ENCODE measurements at regions of chr6 and their contacts with region 1.

Region 1: GRCh38 chr6:40328405-40328987 is 258.7 kb downstream of the LRFN2 start:
- DNase-seq: peak; percentile 50 to 63
- H3K4me3 ChIP-seq: no peak overlapping the region
- H3K27ac ChIP-seq: no peak overlapping the region
- H3K4me1 ChIP-seq: no peaks in the 10 kb centered on the region
- H3K27me3 ChIP-seq: no peaks in the 10 kb centered on the region
- CTCF ChIP-seq: peak in 2 of 3 donors; percentile 71 to 90
- POLR2A ChIP-seq: no peak

Region 2: GRCh38 chr6:40341726-40342125 is 13.2 kb after region 1 on chr6:
- intact Hi-C with region 1: loop called (anchors 1 kb)
- DNase-seq: no peak
- H3K4me3 ChIP-seq: no peak overlapping the region
- H3K27ac ChIP-seq: no peak overlapping the region
- H3K4me1 ChIP-seq: no peaks in the 10 kb centered on the region
- H3K27me3 ChIP-seq: peaks cover 0 to 3% of the 10 kb centered on the region in 2 donors
- CTCF ChIP-seq: no peak
- POLR2A ChIP-seq: no peak

Region 3: DNA sequence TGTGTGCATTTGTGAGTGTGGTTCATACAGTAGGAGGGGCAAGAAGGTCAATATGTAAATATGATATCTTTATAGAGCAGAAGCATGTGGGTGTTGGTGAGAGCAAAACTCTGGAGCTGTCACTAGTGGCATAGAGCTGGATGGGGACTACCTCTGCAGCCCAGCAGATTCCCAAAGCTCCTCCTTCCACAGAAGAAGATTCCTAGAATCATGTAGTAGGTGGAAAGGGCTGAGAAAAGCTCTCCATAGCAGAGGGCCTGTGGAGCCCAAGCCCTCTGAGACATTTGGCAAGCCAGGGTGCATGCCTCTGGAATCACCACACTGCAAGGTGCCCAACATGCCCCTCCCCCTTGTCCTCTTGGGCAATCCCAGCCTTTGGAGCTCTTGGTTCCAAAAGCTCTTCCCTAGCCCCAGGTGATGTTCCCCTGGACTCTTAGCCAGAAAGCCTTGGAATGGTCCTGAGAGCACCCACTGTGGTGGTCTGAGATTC is 25.5 kb after region 1 on chr6:
- intact Hi-C with region 1: loop called (anchors 1 kb)
- DNase-seq: no peak
- H3K4me3 ChIP-seq: no peak overlapping the region
- H3K27ac ChIP-seq: no peak overlapping the region
- H3K4me1 ChIP-seq: no peaks in the 10 kb centered on the region
- H3K27me3 ChIP-seq: no peaks in the 10 kb centered on the region
- CTCF ChIP-seq: no peak
- POLR2A ChIP-seq: no peak

Measured in breast epithelium (tissue), 4 donors.